T-cell (primary cell): ENCODE measurements at regions of chr1 and their contacts with region 1.

Region 1: GRCh38 chr1:108643492-108644335 is 17.2 kb downstream of the HENMT1 start:
- DNase-seq: peak in 29 of 35 experiments; percentile 18 to 84 (median 47)
- ATAC-seq: peak; percentile 15 to 37 (median 28)
- H3K4me3 ChIP-seq: no peak overlapping the region
- H3K4me3 Mint-ChIP-seq: peak overlapping the region in 2 of 3 donors; percentile 5 to 58
- H3K27ac ChIP-seq: peak overlapping the region; percentile 97
- H3K27ac Mint-ChIP-seq: peak overlapping the region; percentile 99
- H3K4me1 ChIP-seq: peaks cover 45 to 62% of the 10 kb centered on the region in 2 experiments
- H3K4me1 Mint-ChIP-seq: peaks cover 76 to 78% (median 78%) of the 10 kb centered on the region in 3 donors
- H3K27me3 ChIP-seq: no peaks in the 10 kb centered on the region
- H3K27me3 Mint-ChIP-seq: no peaks in the 10 kb centered on the region

Region 2: DNA sequence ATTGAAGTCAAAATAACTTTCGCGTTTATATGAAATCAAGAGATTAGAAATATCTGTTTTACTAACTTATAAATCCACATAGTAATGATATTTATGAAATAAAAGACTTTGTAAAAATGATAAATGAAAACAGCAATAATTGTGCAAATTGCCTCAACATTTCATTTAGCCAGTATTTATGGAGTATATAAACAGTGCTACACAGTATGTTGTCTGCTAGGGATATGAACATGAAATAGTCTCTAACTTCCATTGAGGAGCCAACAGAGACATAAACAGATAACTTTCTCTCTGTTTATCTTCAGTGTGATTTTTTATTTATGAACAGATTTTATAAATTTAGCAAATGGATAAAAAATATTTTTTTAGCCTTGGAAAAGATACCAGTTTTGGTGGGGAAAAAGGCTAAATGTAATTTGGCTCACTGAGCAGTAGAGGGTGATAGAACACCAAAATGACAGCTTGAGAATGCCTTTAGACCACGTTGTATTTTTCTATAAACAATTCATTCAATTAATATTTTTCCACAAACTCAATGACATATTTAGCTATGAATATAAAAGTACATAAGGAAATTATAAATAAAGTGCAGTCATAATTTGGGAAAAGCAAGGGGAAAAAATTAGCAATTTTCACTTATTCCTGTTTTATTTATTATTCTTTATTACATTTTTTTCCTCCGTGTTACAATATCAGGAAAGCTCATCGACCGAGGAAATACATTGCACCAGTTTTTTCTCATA is 131.3 kb before region 1 on chr1:
- CTCF ChIA-PET with region 1: interaction called, 6 to 58 read pairs
- POLR2A ChIA-PET with region 1: no interaction called
- DNase-seq: peak in 1 of 35 experiments; percentile 75
- ATAC-seq: peak; percentile 45 to 72 (median 52)
- H3K4me3 ChIP-seq: no peak overlapping the region
- H3K4me3 Mint-ChIP-seq: no peak overlapping the region
- H3K27ac ChIP-seq: no peak overlapping the region
- H3K27ac Mint-ChIP-seq: no peak overlapping the region
- H3K4me1 ChIP-seq: no peaks in the 10 kb centered on the region
- H3K4me1 Mint-ChIP-seq: no peaks in the 10 kb centered on the region
- H3K27me3 ChIP-seq: no peaks in the 10 kb centered on the region
- H3K27me3 Mint-ChIP-seq: peaks cover 3 to 8% of the 10 kb centered on the region in 2 donors

Region 3: DNA sequence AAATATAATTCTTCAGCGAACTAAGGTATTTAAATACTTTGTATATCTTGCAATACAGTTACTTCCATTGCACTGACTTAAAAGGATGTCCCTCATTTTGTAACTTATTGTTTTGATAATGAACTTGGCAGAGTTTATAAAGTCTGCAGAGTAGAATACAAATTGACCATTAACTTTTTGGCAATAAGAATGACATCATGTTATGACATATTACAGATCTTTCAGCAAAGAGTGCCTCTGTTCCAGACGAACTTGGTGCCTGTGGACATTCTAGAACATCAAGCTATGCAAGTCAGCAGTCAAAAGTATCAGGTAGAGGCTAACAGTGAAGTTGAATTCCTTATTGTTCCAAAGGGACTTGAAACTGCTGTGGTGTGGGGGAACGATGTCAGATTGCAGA is 15.8 kb before region 1 on chr1:
- CTCF ChIA-PET with region 1: interaction called, 6 to 10 read pairs
- POLR2A ChIA-PET with region 1: no interaction called
- DNase-seq: no peak
- ATAC-seq: no peak
- H3K4me3 ChIP-seq: no peak overlapping the region
- H3K4me3 Mint-ChIP-seq: no peak overlapping the region
- H3K27ac ChIP-seq: no peak overlapping the region
- H3K27ac Mint-ChIP-seq: no peak overlapping the region
- H3K4me1 ChIP-seq: no peaks in the 10 kb centered on the region
- H3K4me1 Mint-ChIP-seq: no peaks in the 10 kb centered on the region
- H3K27me3 ChIP-seq: no peaks in the 10 kb centered on the region
- H3K27me3 Mint-ChIP-seq: no peaks in the 10 kb centered on the region

Region 4: DNA sequence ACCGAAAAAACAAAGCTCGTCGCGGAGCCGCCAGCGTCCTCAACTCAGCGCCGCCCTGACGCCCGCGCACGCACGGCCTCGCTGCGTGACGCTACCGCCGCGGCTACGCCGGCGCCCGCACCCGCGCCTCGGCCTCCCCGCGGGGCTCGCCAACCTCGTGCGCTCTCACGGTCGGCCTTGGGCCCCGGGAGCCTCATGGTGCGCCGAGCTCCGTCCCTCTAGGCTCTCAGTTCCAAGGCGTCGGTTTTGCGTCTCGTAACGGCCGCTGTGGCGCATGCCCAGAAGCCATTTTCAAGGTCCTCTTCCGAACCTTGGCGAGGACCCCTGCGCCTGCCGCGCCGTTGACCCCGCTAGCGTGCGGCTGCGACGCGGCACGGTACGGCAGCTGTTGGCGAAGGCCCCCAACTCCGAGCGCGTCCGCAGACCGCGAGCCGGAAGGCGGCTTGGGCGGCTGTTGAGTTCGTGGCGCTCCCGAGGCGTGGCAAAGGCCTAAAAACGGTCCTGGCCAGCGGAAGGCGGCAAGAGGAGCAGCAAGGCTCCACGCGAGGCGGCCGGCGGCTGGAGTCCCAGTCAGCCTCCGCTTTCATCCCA is 17.4 kb after region 1 on chr1 and contains the start of gene HENMT1:
- CTCF ChIA-PET with region 1: interaction called, 6 to 32 read pairs
- POLR2A ChIA-PET with region 1: interaction called, 15 to 45 read pairs
- DNase-seq: peak; percentile 70 to 93 (median 81)
- ATAC-seq: peak; percentile 89 to 91 (median 90)
- H3K4me3 ChIP-seq: peak within 1 kb of the TSS; percentile 58 to 62
- H3K4me3 Mint-ChIP-seq: peak within 1 kb of the TSS; percentile 80 to 85 (median 82)
- H3K27ac ChIP-seq: peak within 1 kb of the TSS; percentile 98
- H3K27ac Mint-ChIP-seq: peak within 1 kb of the TSS; percentile 94 to 95
- H3K4me1 ChIP-seq: peaks cover 8 to 17% of the 10 kb centered on the region in 2 experiments
- H3K4me1 Mint-ChIP-seq: peaks cover 35 to 48% (median 40%) of the 10 kb centered on the region in 3 donors
- H3K27me3 ChIP-seq: no peaks in the 10 kb centered on the region
- H3K27me3 Mint-ChIP-seq: no peaks in the 10 kb centered on the region
- total RNA-seq, gene HENMT1: 11.0 to 20.2 (median 16.0) TPM

Region 5: DNA sequence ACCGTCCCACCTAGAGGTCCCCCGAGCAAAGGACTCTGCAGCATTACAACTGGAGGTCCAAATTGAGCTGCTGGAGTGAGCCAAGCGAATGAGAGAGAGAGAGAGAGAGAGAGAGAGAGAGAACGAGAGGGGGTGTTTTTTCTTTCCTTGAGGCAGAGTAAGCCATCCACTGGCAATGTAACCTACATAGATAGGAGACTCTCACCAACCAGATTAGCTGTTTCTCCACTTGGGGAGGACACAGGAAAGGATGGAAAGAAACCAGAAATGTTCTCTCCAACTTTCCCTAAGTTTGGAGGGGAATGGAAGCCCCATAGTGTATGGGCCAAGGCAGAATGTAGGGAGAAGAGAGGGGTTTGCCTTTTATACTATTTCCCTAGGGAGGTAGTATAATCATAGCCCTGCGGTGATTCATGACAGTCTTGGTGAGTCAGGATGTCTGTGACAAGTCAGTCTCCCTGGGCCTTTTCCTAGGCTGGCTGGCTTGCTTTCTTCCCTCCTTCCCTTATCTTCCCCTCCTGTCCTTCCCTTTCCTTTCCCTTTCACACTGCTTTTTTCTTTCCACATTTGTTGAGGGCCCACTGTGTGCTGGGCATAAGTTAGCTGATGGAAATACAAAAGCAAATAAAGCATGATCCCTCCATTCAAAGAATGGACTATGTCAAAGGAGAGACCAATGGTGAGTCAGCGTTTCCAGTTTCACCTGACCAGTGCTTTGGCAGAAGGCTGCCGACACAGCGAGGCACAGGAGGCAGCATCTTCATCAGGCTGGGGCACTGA is 76.1 kb after region 1 on chr1:
- CTCF ChIA-PET with region 1: no interaction called
- POLR2A ChIA-PET with region 1: no interaction called
- DNase-seq: no peak
- ATAC-seq: no peak
- H3K4me3 ChIP-seq: no peak overlapping the region
- H3K4me3 Mint-ChIP-seq: no peak overlapping the region
- H3K27ac ChIP-seq: no peak overlapping the region
- H3K27ac Mint-ChIP-seq: no peak overlapping the region
- H3K4me1 ChIP-seq: no peaks in the 10 kb centered on the region
- H3K4me1 Mint-ChIP-seq: no peaks in the 10 kb centered on the region
- H3K27me3 ChIP-seq: no peaks in the 10 kb centered on the region
- H3K27me3 Mint-ChIP-seq: peaks cover 3 to 5% of the 10 kb centered on the region in 2 donors

Region 6: GRCh38 chr1:108816049-108816893 is 172.6 kb after region 1 on chr1:
- CTCF ChIA-PET with region 1: no interaction called
- POLR2A ChIA-PET with region 1: no interaction called
- DNase-seq: no peak
- ATAC-seq: no peak
- H3K4me3 ChIP-seq: no peak overlapping the region
- H3K4me3 Mint-ChIP-seq: no peak overlapping the region
- H3K27ac ChIP-seq: no peak overlapping the region
- H3K27ac Mint-ChIP-seq: no peak overlapping the region
- H3K4me1 ChIP-seq: no peaks in the 10 kb centered on the region
- H3K4me1 Mint-ChIP-seq: no peaks in the 10 kb centered on the region
- H3K27me3 ChIP-seq: no peaks in the 10 kb centered on the region
- H3K27me3 Mint-ChIP-seq: peaks cover 0 to 3% of the 10 kb centered on the region in 2 donors

Region 7: GRCh38 chr1:110136911-110137310 is 1493.2 kb after region 1 on chr1:
- CTCF ChIA-PET with region 1: no interaction called
- POLR2A ChIA-PET with region 1: no interaction called
- DNase-seq: peak in 19 of 35 experiments; percentile 4 to 40 (median 17)
- ATAC-seq: peak in 3 of 4 experiments; percentile 15 to 64 (median 17)
- H3K4me3 ChIP-seq: no peak overlapping the region
- H3K4me3 Mint-ChIP-seq: no peak overlapping the region
- H3K27ac ChIP-seq: no peak overlapping the region
- H3K27ac Mint-ChIP-seq: no peak overlapping the region
- H3K4me1 ChIP-seq: peaks cover 0 to 6% of the 10 kb centered on the region in 2 experiments
- H3K4me1 Mint-ChIP-seq: peaks cover 12 to 13% (median 13%) of the 10 kb centered on the region in 3 donors
- H3K27me3 ChIP-seq: peaks cover 0 to 44% of the 10 kb centered on the region in 2 experiments
- H3K27me3 Mint-ChIP-seq: peaks cover 31 to 52% of the 10 kb centered on the region in 2 donors